ENCODE measurements at regions of chr6 and their contacts with region 1.

Region 1: DNA sequence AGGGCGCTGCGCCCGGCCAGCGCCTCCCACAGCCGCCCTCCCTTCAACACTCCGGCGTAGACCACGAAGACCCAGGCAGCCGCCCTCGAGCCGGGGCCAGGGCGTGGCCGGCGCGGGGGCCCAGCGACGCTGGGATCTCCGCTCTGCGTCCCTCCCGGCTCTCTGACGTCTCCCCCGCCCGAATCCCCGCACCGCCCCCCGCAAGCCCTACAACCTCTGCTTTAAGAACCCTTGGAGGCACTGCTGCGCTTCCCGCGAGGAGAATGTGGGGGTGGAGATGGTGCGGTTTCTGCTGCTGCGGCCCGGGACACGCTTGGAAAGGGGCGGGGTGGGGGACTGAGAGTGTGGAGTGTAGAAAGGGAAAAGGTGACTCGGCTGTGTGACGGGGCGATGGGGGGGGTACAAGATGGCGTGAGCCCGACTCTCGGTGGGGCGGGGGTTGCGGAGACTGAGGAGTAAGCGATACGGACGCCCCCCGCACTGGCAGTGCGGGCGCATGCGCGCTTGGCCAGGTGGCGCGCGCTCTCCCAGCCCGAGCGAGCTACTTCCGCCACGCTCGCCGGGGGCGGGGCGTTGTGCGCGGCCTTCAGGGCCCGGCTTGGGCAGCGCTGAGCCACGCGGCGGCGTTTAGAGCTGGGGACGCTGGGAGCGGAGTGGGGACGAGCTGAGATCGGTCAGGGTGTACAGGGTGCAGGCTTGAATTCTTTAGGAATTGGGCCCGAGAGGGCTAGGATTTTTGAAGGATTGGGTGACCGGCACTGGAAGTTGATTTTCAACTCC is at the start of gene SUPT3H:
- DNase-seq: peak; percentile 74 to 86
- ATAC-seq: peak; percentile 85 to 90
- H3K4me3 ChIP-seq: peak within 1 kb of the TSS; percentile 93 to 95 (median 94)
- H3K27ac ChIP-seq: peak within 1 kb of the TSS; percentile 97 to 99 (median 98)
- H3K4me1 ChIP-seq: peaks cover 12 to 16% of the 10 kb centered on the region in 2 donors
- H3K27me3 ChIP-seq: no peaks in the 10 kb centered on the region
- CTCF ChIP-seq: peak in 3 of 5 experiments; percentile 17 to 36 (median 30)
- POLR2A ChIP-seq: peak; percentile 76 to 79
- total RNA-seq, gene SUPT3H: 1.5 to 9.0 (median 4.2) TPM

Region 2: GRCh38 chr6:45504947-45505346 is 127.2 kb after region 1 on chr6:
- in situ Hi-C with region 1: no loop called
- intact Hi-C with region 1: no loop called
- DNase-seq: peak in 1 of 2 donors; percentile 23
- ATAC-seq: peak; percentile 66 to 68
- H3K4me3 ChIP-seq: no peak overlapping the region
- H3K27ac ChIP-seq: peak overlapping the region in 1 of 4 donors; percentile 29
- H3K4me1 ChIP-seq: peaks cover 5 to 9% of the 10 kb centered on the region in 2 donors
- H3K27me3 ChIP-seq: no peaks in the 10 kb centered on the region
- CTCF ChIP-seq: no peak
- POLR2A ChIP-seq: no peak

Region 3: DNA sequence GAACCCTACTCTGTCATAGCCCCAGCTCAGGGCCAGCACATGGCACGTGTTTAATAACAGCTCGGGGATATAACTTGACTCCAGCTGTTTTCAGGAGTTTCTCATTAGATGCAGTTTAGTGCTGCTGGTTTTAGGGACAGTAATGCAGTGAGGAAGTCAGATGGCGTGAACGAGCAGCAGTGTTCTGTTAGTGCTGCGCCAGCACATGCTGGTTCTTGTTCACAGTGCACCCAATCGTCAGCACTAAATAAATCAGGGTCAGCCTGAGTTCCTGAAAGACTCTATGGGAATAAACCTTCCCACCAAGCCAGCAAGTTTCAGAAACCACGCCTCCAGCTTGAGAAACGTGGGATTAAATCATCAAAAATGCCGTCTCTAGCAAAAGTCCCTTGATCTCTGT is 235.9 kb after region 1 on chr6:
- in situ Hi-C with region 1: no loop called
- intact Hi-C with region 1: no loop called
- DNase-seq: peak; percentile 40 to 48
- ATAC-seq: peak; percentile 64 to 76
- H3K4me3 ChIP-seq: no peak overlapping the region
- H3K27ac ChIP-seq: no peak overlapping the region
- H3K4me1 ChIP-seq: no peaks in the 10 kb centered on the region
- H3K27me3 ChIP-seq: no peaks in the 10 kb centered on the region
- CTCF ChIP-seq: no peak
- POLR2A ChIP-seq: no peak

Region 4: DNA sequence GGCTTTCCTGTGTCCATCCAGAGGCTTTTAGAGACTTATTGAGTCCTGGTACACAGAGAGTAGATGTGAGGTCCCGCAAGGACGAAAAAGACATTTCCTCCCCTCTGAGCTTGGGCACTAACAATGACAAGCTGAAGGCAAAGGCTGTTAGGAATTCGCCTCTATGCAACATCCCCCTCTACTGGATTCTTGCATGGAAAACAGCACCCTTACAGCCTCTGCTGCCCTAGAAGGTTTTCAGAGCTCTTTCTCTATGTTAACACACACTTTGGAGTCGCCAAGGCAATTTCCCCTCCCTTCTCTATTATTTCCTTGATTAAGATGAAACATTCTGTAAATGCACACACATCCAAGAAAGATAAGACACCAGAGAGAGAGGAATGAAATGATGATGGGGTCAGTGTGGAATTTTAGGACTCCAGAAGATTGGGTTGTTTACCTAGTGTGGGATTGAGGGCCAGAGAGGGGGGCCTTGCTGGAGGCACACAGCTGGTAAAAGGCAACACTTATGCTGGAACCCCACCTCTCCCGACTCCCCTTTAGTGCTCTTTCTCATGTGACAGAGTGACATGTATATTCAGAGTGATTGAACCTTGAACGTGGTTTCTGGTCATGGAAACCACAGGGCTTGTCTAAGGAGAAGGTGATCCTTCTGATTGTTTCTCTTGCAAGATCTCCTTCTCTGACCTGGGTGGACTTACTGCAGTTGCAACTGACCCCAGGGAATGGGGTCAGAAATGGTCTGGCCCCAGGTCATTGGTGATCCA is 337.2 kb after region 1 on chr6:
- in situ Hi-C with region 1: no loop called
- intact Hi-C with region 1: loop called (anchors 2 kb)
- DNase-seq: peak; percentile 16 to 43
- ATAC-seq: peak; percentile 95 to 96
- H3K4me3 ChIP-seq: no peak overlapping the region
- H3K27ac ChIP-seq: no peak overlapping the region
- H3K4me1 ChIP-seq: peaks cover 0 to 7% of the 10 kb centered on the region in 2 donors
- H3K27me3 ChIP-seq: no peaks in the 10 kb centered on the region
- CTCF ChIP-seq: peak; percentile 60 to 84 (median 70)
- POLR2A ChIP-seq: no peak